ENCODE measurements at regions of chr19 and their contacts with region 1.

Region 1: DNA sequence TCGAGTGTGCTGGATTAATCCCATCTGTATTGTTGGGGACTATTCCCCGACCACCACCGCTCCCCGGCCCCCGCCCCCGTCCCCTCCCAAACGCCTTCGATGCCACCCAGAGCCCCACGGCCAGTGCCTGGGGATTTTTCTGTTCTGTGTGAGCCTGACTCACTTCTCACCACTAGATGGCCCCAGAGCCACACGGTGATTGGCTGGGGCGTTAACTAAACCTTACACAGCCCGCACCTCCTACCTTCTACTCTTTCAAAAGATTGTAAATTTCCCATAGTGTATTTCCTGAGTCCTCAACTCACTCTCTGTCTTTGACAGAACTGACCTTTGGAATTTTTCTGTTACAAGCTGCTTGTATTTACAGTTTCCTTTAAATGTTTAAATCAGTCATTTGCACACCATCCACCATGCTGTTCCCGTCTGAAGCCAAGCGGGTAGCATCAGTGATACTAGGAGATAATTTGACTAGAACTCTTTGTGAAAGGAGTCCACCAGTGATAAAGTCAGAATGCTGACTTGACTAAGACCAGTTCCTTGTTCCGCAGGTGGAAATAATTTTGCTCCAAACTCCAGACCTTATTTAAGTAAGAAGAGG is 61.4 kb downstream of the RFX2 start:
- DNase-seq: peak; percentile 81
- ATAC-seq: peak; percentile 97 to 98

Region 2: DNA sequence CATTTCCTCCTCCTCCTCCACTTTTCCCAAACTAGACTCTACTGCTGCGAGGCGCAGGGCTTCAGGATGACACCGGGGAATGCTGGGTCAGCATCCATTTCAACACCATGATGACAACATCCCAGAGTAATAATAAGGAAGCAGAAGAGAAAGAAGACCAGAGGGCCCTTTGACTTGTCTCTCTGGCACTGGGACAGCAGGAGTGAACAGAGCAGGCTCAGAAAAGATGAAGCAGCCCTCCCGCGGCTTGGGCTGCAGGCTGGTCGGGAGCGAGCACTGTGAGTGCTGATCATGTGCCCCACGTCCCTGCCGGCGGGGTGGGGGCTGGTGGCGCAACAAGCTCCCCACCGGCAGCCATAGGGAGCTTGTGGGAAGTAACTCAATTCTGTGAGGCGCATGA is 101.5 kb before region 1 on chr19:
- intact Hi-C with region 1: no loop called
- DNase-seq: peak; percentile 75
- ATAC-seq: peak; percentile 60 to 71

Region 3: DNA sequence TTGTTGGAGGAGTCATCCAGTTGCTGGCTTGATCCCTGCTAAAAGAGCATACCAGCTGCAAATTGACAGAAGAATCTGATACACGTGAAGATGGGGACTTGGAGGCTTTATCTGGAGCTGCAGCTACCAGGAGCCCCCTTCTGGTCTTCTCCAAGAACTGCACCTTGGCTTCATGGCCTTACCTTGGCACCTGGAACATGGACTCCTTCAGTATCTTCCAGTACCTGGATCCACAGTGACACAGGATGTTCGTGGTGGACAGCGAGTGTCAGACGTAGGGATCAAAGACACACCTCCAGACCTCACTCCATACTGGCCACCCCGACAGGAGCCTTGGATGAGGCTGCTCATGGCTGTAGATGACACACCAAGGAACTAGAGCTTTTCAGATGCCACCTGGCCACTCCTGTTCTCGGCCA is 76.7 kb after region 1 on chr19:
- intact Hi-C with region 1: loop called (anchors 1 to 2 kb)
- DNase-seq: peak; percentile 45
- ATAC-seq: peak; percentile 78 to 90

Region 4: GRCh38 chr19:6249296-6249695 is 200.4 kb after region 1 on chr19:
- intact Hi-C with region 1: no loop called
- DNase-seq: no peak
- ATAC-seq: peak in 1 of 2 donors; percentile 60

Measured in left cardiac atrium (tissue), 4 donors.